ENCODE measurements at regions of chr19 and their contacts with region 1.

Region 1: GRCh38 chr19:49148784-49149651 is 6.2 kb downstream of the HRC start:
- DNase-seq: peak; percentile 97
- ATAC-seq: peak; percentile 86

Region 2: GRCh38 chr19:49097455-49098288 is 51.3 kb before region 1 on chr19:
- intact Hi-C with region 1: loop called (anchors 5 kb)
- DNase-seq: no peak
- ATAC-seq: peak; percentile 65

Region 3: GRCh38 chr19:49118565-49119410 is 30.2 kb before region 1 on chr19 and contains the start of gene C19orf73:
- intact Hi-C with region 1: loop called (anchors 2 kb)
- DNase-seq: peak; percentile 96
- ATAC-seq: peak; percentile 93
- total RNA-seq, gene C19orf73: 1.8 TPM

Region 4: GRCh38 chr19:49196527-49197240 is 47.7 kb after region 1 on chr19:
- intact Hi-C with region 1: loop called (anchors 5 kb)
- DNase-seq: peak; percentile 70
- ATAC-seq: peak; percentile 82

Measured in Right ventricle myocardium inferior (tissue), 1 donor.